Posterior cingulate gyrus (tissue), 11 donors: ENCODE measurements at regions of chr13 and their contacts with region 1.

Region 1: DNA sequence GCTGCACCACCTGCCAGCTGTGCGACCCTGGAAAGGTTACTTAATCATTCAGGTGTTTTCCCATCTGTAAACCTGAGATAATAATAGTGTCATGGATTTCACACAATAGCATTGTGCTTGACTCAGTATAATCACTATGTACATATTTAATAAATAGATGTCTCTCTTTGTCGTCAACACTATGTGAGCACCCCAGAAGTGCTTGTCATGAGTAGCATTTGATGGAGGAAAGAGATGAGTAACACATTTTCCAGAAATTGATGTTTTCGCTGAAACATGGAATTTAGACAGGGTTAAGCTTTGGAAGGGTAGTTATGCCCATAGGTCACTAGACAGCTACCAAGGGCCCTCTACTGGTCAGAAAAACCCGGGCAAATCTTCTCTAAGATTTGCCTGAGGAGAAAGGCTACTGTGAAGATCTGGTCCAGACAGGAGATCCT is 9.5 kb upstream of the MBNL2 start:
- DNase-seq: peak in 2 of 10 donors; percentile 37 to 56

Region 2: GRCh38 chr13:97116754-97117153 is 95.9 kb before region 1 on chr13:
- intact Hi-C with region 1: loop called (anchors 1 kb)
- DNase-seq: no peak